ENCODE measurements at regions of chr1 and their contacts with region 1.

Region 1: DNA sequence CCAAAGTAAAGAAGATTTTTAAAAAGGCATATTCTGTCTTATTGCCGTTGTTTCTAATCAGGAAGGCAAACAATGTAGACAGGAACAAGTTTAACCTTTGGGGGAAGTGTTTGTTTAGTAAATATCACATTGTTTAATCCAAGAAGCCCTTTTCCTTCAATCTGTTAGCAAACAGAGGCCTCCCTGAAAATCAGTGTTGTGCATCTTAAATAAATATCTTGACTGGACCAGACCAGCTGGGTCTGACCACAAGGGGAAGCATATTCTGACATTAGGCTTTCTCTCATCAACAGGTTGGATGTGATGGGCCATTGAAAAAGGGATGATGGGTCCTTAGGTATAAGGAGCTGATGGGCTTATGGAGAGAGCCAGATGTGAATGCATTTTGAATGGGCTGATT is 81.8 kb upstream of the SGIP1 start:
- DNase-seq: no peak
- ATAC-seq: no peak
- H3K4me3 ChIP-seq: no peak overlapping the region
- H3K27ac ChIP-seq: peak overlapping the region in 1 of 10 donors; percentile 59
- H3K4me1 ChIP-seq: peaks cover 3 to 25% (median 15%) of the 10 kb centered on the region in 9 donors
- H3K27me3 ChIP-seq: no peaks in the 10 kb centered on the region
- CTCF ChIP-seq: peak in 3 of 9 donors; percentile 7 to 22 (median 17)

Region 2: DNA sequence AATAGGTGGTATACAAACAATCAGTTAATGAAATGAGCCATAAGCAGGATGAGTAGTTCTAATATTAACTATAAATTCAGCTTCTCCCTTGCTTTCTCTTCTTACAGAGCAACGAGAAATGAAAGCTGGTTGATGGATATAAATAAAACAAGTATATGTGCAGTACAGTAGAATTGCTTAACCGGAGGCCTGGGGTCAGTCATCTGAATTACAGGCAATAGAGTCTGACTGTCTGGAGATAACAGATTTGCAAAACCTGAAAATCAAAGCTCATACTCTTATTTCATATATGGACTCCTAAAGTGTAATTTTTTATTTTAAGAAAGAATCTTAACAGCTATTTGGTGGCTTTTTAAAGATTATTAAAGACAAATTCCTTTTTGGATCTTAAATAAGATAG is 38.7 kb after region 1 on chr1:
- intact Hi-C with region 1: loop called in 1 of 10 experiments (anchors 5 kb)
- DNase-seq: no peak
- ATAC-seq: peak in 4 of 8 donors; percentile 51 to 79 (median 62)
- H3K4me3 ChIP-seq: no peak overlapping the region
- H3K27ac ChIP-seq: peak overlapping the region in 1 of 10 donors; percentile 35
- H3K4me1 ChIP-seq: peaks cover 0 to 17% (median 9%) of the 10 kb centered on the region in 9 donors
- H3K27me3 ChIP-seq: no peaks in the 10 kb centered on the region
- CTCF ChIP-seq: no peak

Region 3: DNA sequence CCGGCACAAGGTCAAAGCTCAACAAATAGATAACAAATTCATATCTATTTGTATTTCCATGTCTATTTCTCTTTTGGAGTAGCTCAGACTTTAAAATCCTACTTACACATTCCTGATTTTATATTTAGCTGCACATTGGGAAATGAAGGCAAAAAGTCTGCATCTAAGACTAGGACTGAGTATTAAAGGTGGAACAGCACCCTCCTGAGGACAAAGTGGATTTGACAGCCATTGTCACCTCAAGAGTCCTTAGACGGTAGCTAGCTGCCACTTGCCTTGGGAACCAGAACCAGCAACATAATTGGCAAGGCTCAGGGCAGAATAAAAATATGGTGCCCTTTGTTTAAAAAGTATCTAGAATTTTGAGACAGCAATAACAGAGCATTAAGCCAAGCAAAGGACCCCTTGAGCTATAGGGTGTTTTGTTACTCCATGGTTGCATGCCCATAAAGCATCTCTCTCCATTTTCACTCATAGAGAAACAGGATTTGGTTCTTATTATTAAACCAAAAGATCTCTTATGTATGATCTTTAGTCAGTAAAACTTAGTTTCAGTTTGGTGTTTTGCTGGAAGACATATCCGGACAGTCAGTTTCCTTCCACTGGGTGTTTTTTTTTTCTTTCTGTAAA is 51.8 kb after region 1 on chr1:
- intact Hi-C with region 1: loop called in 5 of 10 experiments (anchors 2 to 5 kb)
- DNase-seq: peak in 1 of 2 donors; percentile 64
- ATAC-seq: peak; percentile 64 to 93 (median 78)
- H3K4me3 ChIP-seq: no peak overlapping the region
- H3K27ac ChIP-seq: peak overlapping the region in 1 of 10 donors; percentile 8
- H3K4me1 ChIP-seq: peaks cover 0 to 10% (median 0%) of the 10 kb centered on the region in 9 donors
- H3K27me3 ChIP-seq: no peaks in the 10 kb centered on the region
- CTCF ChIP-seq: peak; percentile 25 to 80 (median 71)